PC-9 (cell line): ENCODE measurements at regions of chr3 and their contacts with region 1.

Region 1: DNA sequence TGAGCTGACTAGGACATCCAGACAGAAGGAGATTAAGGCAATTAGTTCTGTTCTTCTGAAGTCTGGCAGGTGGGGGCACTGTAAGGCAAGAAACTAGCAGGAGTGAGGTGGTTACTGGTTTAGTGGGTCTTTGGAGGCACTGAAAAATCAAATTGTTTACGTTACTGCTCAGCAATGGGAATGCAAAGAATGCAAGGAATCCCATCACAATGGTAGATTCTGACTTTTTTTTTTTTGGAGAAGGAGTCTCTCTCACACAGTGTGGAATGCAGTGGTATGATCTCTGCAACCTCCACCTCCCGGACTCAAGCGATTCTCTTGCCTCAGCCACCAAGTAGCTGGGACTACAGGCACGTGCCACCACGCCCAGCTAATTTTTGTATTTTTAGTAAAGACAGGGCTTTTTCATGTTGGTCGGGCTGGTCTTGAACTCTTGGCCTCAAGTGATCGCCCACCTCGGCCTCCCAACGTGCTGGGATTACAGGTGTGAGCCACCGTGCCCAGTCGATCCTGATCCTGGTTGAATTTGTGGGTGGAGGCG is 16.4 kb downstream of the FAM107A start:
- DNase-seq: peak; percentile 81 to 88
- H3K4me3 ChIP-seq: no peak overlapping the region
- H3K27ac ChIP-seq: no peak overlapping the region
- H3K4me1 ChIP-seq: peaks cover 17% of the 10 kb centered on the region; the same call in 1 of the 2 replicates
- H3K27me3 ChIP-seq: no peaks in the 10 kb centered on the region
- CTCF ChIP-seq: peak; percentile 69

Region 2: GRCh38 chr3:58482917-58483636 is 77.8 kb before region 1 on chr3:
- CTCF ChIA-PET with region 1: no interaction called
- POLR2A ChIA-PET with region 1: no interaction called
- intact Hi-C with region 1: no loop called
- DNase-seq: no peak
- H3K4me3 ChIP-seq: no peak overlapping the region
- H3K27ac ChIP-seq: no peak overlapping the region
- H3K4me1 ChIP-seq: peaks cover 18% of the 10 kb centered on the region
- H3K27me3 ChIP-seq: no peaks in the 10 kb centered on the region
- CTCF ChIP-seq: no peak

Region 3: DNA sequence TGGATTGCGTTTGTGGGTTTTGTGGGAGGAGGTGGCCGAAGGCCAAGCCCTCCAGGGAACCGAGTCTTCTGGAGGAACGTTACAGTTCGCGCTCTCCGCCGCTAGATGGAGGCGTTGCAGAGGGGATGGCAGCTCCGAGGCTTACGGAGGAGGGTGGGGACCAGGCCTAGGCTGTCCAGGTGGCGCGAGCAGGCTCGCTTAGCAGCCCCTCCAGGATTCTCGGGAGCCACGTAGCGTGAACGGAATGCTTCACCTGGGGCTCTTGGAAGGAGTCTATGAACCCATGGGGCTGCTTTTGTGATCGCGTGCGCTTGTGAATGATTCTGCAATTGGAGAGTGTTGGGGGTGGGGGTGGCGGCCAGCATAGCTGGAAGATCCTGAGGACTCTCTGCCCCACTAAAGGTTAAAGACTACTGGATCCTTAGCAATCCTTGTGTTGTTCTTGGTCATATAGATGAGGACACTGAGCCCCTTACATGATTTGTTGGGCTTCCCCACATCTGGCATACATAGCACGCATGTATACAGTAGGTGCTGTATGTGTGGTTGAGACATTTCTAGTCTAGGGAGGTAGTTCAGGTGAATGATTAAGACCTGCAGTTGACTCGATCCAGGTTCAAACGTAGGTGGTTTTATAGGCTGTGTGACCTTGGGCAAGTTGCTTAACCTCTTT is 80.0 kb after region 1 on chr3:
- CTCF ChIA-PET with region 1: interaction called, 14 read pairs
- POLR2A ChIA-PET with region 1: no interaction called
- intact Hi-C with region 1: no loop called
- DNase-seq: peak; percentile 69 to 81
- H3K4me3 ChIP-seq: no peak overlapping the region
- H3K27ac ChIP-seq: no peak overlapping the region
- H3K4me1 ChIP-seq: no peaks in the 10 kb centered on the region
- H3K27me3 ChIP-seq: no peaks in the 10 kb centered on the region
- CTCF ChIP-seq: peak; percentile 88

Region 4: DNA sequence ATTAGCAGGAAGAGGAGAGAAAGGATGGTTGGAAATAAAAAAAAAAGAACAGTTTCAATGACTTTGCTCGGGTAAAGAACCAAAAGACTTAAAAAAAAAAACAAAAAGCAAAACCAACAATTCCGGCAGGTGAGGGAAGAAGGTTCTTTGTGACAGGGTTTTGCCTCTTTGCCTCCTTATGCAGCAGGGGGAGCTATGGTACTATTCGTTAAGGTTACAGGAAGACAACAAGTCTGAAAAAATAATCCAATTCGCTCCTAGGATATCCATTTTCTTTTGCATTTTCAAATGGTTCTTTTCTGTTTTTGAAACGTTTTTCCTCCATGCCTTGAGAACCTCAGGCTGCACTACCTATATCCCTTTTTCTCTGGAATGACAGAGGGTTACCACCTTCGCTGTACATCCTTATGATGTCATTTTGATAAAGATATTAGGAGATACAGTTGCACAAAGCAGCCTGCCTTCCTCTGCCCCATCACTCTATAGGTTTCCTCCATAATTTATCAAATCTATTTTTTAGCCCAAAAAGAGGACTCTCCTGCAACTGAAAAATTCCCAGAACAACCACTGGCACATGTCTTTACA is 434.0 kb after region 1 on chr3:
- CTCF ChIA-PET with region 1: no interaction called
- POLR2A ChIA-PET with region 1: no interaction called
- intact Hi-C with region 1: loop called (anchors 5 kb)
- DNase-seq: peak in 1 of 2 experiments; percentile 35
- H3K4me3 ChIP-seq: no peak overlapping the region
- H3K27ac ChIP-seq: no peak overlapping the region
- H3K4me1 ChIP-seq: peaks cover 16% of the 10 kb centered on the region
- H3K27me3 ChIP-seq: no peaks in the 10 kb centered on the region
- CTCF ChIP-seq: peak; percentile 78

Region 5: DNA sequence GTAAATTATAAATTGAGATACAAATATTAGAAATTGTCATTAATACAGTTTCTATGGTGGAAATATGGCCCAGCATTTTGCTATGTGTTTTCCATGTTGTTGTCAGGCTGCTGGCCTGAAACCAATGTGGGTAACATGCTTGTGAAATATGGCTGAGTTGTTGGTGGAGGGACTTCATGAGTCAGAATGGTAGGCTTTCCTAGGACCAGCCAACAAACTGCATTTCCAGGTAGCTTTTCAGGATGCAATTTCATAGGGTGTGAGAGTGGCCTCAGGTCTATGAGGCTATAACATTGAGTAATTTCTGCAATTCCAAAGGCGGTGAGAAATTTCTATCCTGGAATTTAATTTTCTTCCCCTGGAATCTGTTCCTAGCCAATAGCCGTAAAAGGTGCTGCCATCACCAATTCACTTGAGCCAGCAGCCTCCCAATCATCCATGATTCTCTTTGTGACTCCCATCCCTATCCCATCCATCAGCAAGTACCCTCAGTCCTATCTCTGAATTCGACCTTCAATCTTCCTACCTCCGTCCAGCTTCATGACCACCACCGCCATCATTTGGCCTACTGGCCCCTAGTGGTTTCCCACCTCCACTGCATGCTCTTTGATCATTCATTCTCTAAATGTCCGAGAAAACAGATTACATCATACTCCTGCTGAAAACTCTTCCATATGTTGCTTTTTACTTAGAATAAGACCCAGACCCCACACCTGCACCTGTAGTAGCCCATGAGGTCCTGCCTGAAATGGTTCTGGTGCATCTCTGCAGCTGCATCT is 765.6 kb after region 1 on chr3:
- CTCF ChIA-PET with region 1: no interaction called
- POLR2A ChIA-PET with region 1: no interaction called
- intact Hi-C with region 1: loop called (anchors 5 kb)
- DNase-seq: no peak
- H3K4me3 ChIP-seq: no peak overlapping the region
- H3K27ac ChIP-seq: 0 out of 2 replicates have a peak overlapping the region, but pooled peaks have one; percentile 37
- H3K4me1 ChIP-seq: peaks cover 9% of the 10 kb centered on the region; the same call in 1 of the 2 replicates
- H3K27me3 ChIP-seq: no peaks in the 10 kb centered on the region
- CTCF ChIP-seq: no peak

Region 6: DNA sequence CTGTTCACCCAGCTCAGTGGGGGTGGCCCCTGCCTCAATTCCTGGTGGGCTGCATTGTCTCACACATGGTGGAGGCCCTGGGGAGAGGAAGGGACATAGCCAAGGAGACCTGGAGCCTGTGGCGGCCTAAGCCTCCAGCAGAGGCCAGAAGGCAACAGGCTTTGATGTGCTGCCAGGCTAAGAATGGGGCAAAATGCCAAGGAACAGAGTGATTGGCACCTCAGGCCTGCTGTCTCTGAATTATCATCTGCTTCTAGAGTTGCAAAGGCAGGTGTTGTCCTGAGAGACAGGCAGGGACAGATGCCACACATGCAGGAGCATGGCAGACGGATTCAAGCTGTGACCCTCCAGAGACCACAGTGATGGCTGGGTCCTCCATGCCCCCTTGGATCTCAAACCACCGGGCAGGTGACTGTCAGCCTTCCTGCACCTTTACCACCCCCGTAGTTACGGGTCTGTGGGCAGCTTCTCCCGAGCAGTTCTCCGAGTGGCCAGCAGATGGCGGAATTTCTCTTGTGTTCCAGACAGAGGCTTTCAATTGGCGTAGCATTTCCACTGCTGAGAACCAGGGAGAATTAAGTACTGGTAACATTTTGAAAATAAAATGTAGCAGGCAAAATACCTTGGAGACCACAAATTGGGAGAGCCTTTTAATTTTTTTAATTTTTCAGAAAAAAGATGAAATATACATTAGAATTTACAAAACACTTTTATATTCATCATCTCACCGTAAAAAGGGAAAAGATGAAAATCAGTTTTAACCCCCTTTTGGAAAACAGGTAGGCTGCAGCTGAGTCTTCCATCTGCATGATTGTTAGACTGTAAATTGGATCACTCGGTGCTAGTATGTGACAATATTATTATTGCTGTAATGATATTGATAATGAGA is 1014.5 kb after region 1 on chr3:
- CTCF ChIA-PET with region 1: no interaction called
- POLR2A ChIA-PET with region 1: no interaction called
- intact Hi-C with region 1: loop called (anchors 2 kb)
- DNase-seq: peak; percentile 50 to 74
- H3K4me3 ChIP-seq: no peak overlapping the region
- H3K27ac ChIP-seq: no peak overlapping the region
- H3K4me1 ChIP-seq: peaks cover 7% of the 10 kb centered on the region
- H3K27me3 ChIP-seq: no peaks in the 10 kb centered on the region
- CTCF ChIP-seq: peak; percentile 97